ENCODE measurements at regions of chr17 and their contacts with region 1.

Region 1: GRCh38 chr17:46121841-46122485 is 71.3 kb downstream of the KANSL1 start:
- DNase-seq: no peak
- H3K4me3 ChIP-seq: no peak overlapping the region
- H3K27ac ChIP-seq: no peak overlapping the region
- H3K4me1 ChIP-seq: peaks cover 7 to 19% (median 15%) of the 10 kb centered on the region in 4 experiments; a peak in 6 of 7 replicates
- H3K27me3 ChIP-seq: no peaks in the 10 kb centered on the region
- CTCF ChIP-seq: no peak
- EP300 ChIP-seq: no peak
- POLR2A ChIP-seq: no peak
- RAD21 ChIP-seq: no peak

Region 2: GRCh38 chr17:46108550-46109110 is 13.3 kb before region 1 on chr17:
- CTCF ChIA-PET with region 1: interaction called, 7 read pairs
- POLR2A ChIA-PET with region 1: interaction called, 10 read pairs
- DNase-seq: no peak
- H3K4me3 ChIP-seq: no peak overlapping the region
- H3K27ac ChIP-seq: no peak overlapping the region
- H3K4me1 ChIP-seq: peaks cover 16 to 32% (median 25%) of the 10 kb centered on the region in 4 experiments
- H3K27me3 ChIP-seq: no peaks in the 10 kb centered on the region
- CTCF ChIP-seq: no peak
- EP300 ChIP-seq: no peak
- POLR2A ChIP-seq: no peak
- RAD21 ChIP-seq: no peak